ENCODE measurements at regions of chr2 and their contacts with region 1.

Region 1: DNA sequence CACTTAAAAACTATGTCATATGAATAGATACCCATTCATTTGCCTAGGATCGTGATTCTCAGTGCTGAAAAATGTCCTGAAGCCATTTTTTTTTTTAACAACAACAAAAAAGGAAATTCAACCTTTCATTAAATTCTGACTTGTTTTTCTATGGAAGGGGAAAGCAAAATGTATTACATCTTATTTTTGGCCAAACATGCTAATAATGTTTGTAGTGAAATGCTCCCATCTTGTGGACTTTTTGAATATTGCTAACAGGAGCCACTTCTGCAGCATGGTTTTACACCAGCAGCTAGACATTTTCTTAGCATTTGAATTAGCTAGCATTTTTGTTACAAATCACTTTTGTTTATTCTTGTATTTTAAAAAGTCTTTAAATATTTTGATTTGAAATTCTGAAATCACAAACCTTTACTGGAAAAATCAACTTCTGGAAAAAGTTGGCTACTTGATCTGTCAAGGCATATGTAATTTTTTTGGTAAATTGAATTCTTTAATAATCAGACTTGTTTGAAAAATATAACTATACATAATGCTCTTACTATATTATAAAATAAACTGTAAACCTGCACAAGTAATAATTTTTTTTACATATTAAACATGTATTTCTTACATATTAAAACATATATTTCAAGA is 75.8 kb downstream of the KIDINS220 start:
- DNase-seq: no peak
- ATAC-seq: no peak
- H3K4me3 ChIP-seq: no peak overlapping the region
- H3K27ac ChIP-seq: no peak overlapping the region
- H3K4me1 ChIP-seq: peaks cover 0 to 1% of the 10 kb centered on the region in 2 donors
- H3K27me3 ChIP-seq: no peaks in the 10 kb centered on the region

Region 2: GRCh38 chr2:7203055-7203467 is 1558.6 kb before region 1 on chr2:
- intact Hi-C with region 1: loop called in 1 of 2 experiments (anchors 10 kb)
- DNase-seq: peak in 1 of 2 donors; percentile 59
- ATAC-seq: peak; percentile 84
- H3K4me3 ChIP-seq: no peak overlapping the region
- H3K27ac ChIP-seq: no peak overlapping the region
- H3K4me1 ChIP-seq: no peaks in the 10 kb centered on the region
- H3K27me3 ChIP-seq: no peaks in the 10 kb centered on the region

Region 3: DNA sequence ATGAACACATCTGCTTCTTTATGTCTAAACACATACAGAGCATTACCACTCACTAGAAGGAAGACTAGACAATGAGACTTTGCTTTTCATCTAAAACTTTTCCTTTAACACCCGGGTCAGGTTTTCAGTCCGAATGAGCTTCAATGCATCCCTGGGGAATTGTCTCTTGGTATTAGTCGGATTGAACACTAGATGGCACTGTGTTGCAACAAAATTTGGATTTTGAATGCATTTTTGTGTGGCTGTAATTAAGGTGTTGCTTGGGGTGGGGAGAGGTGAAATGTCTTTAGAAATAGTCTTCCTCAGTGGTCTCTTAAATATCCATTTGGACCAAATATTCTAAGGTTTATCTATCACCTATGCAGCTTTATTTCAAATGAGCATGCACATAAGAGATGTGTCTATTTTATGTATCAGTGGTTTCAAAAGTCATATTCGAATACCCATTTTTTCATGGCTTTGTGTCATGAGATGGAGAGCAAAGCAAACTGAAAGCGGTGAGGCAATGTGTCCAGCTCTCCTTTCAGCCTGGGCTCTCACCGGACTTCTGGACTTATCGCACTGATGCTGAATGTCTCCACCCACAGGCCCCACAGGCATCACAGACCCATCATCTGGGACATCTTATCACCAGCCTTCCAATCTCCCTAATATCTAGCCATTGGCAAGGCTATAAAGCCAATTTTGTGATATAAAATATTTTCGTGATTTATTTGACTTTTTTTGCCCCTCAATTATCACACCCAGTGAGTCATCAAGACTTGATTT is 1334.2 kb before region 1 on chr2:
- intact Hi-C with region 1: loop called (anchors 5 kb)
- DNase-seq: no peak
- ATAC-seq: peak; percentile 66
- H3K4me3 ChIP-seq: no peak overlapping the region
- H3K27ac ChIP-seq: no peak overlapping the region
- H3K4me1 ChIP-seq: no peaks in the 10 kb centered on the region
- H3K27me3 ChIP-seq: no peaks in the 10 kb centered on the region

Region 4: DNA sequence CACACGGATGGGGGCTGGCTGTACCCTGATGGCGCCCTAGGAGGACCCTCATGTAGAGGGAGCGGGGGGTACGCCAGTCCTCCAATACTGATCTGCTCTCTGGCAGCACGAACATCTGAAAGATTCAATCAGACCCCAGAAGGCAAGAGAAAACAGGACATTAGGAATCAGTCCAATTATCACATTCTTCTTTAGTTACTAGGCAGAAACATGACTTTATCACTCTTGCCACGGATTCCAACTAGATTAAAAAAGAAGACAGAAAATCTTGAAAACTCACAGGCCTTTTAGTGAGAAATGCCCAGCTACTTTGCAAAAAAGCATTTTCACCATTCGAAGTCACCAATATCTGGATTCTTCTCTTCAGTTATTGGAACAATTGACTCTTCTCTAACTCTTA is 11.4 kb before region 1 on chr2:
- intact Hi-C with region 1: loop called in 1 of 2 experiments (anchors 1 kb)
- DNase-seq: no peak
- ATAC-seq: no peak
- H3K4me3 ChIP-seq: no peak overlapping the region
- H3K27ac ChIP-seq: no peak overlapping the region
- H3K4me1 ChIP-seq: no peaks in the 10 kb centered on the region
- H3K27me3 ChIP-seq: no peaks in the 10 kb centered on the region

Measured in aorta (tissue), 5 donors.